ENCODE measurements at regions of chr3 and their contacts with region 1.

Region 1: DNA sequence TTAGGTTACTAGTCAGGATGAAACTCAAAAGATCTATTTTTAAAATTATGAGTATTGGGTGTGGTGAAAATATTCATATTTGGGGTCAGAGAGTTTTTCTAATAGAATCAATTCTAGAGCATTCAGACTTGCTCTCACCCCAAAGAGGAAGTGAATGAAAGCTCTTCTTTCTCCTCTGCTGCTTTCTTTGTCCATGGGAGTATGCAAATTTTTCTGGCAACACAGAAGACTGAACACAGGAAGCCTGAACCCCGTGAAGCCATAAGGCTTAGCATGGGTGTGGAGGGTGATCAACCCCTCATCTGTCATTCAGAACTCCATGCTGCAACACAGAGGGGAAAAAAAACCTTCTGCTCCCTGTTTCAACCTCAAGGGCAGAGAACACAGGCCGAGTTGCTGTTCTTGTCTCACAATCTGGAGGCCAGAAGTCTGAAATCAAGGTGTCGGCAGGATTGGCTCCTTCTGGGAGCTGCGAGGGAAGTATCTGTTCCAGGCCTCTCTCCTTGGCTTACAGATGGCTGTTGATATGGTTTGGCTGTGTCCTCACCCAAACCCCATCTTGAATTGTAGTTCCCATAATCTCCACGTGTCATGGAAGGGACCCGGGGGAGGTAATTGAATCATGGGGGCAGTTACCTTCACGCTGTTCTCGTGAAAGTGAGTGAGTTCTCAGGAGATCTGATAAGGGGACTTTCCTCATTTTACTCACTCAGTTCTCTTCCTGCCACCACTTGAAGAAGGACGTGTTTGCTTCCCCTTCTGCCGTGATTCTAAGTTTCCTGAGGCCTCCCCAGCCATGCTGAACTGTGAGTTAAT is 33.7 kb upstream of the CD47 start:
- DNase-seq: peak; percentile 84
- H3K4me3 Mint-ChIP-seq: peak overlapping the region; percentile 91
- H3K27ac Mint-ChIP-seq: peak overlapping the region; percentile 99
- H3K4me1 Mint-ChIP-seq: peaks cover 55% of the 10 kb centered on the region
- H3K27me3 Mint-ChIP-seq: no peaks in the 10 kb centered on the region

Region 2: GRCh38 chr3:107522510-107523288 is 601.8 kb before region 1 on chr3 and contains the start of gene BBX:
- CTCF ChIA-PET with region 1: no interaction called
- POLR2A ChIA-PET with region 1: no interaction called
- intact Hi-C with region 1: loop called (anchors 2 kb)
- DNase-seq: peak; percentile 96
- H3K4me3 Mint-ChIP-seq: peak within 1 kb of the TSS; percentile 94
- H3K27ac Mint-ChIP-seq: peak within 1 kb of the TSS; percentile 95
- H3K4me1 Mint-ChIP-seq: peaks cover 23% of the 10 kb centered on the region
- H3K27me3 Mint-ChIP-seq: no peaks in the 10 kb centered on the region
- total RNA-seq, gene BBX: 39.9 to 40.9 TPM

Region 3: GRCh38 chr3:107987036-107987947 is 137.3 kb before region 1 on chr3:
- CTCF ChIA-PET with region 1: no interaction called
- POLR2A ChIA-PET with region 1: no interaction called
- intact Hi-C with region 1: loop called (anchors 5 kb)
- DNase-seq: no peak
- H3K4me3 Mint-ChIP-seq: no peak overlapping the region
- H3K27ac Mint-ChIP-seq: no peak overlapping the region
- H3K4me1 Mint-ChIP-seq: peaks cover 32% of the 10 kb centered on the region
- H3K27me3 Mint-ChIP-seq: no peaks in the 10 kb centered on the region

Region 4: DNA sequence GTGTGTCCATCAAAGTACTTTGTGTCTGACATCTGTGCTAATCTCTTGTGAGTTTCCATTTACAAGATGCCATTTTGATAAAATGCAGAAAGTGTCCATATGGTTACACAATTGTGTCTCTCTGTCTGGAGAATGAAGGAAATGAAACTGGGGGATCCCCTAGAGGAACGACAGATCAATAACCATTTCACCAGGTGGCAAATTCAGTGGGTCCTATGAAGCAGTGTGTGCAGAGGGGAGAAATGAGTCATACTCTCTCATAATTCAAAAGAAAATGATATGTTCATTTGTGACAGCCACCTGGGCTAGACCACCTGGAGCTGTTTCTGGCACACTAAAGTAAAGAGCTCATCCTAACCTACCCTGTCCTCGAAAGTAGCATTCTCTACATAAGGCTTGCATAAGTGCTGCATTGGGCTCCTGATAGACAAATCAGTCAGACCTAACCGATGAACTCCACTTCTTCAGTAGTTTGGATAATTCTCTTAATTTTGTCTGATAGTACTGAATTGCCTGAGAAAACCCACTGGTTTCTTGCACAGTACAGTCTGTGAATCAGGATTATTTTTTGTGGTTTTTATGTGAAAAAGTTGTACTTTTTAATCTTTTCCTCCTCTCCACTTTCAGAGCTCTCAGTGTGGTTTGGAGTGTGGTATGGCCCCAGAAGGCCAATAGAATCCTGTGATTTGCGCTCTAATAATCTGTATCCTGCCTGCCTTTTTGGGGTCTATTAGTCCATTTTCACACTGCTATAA is 23.5 kb before region 1 on chr3:
- CTCF ChIA-PET with region 1: interaction called, 4 read pairs
- POLR2A ChIA-PET with region 1: interaction called, 6 read pairs
- intact Hi-C with region 1: loop called (anchors 1 kb)
- DNase-seq: peak; percentile 54
- H3K4me3 Mint-ChIP-seq: peak overlapping the region; percentile 20
- H3K27ac Mint-ChIP-seq: peak overlapping the region; percentile 24
- H3K4me1 Mint-ChIP-seq: peaks cover 33% of the 10 kb centered on the region
- H3K27me3 Mint-ChIP-seq: no peaks in the 10 kb centered on the region

Region 5: GRCh38 chr3:108202837-108203236 is 78.3 kb after region 1 on chr3:
- CTCF ChIA-PET with region 1: no interaction called
- POLR2A ChIA-PET with region 1: no interaction called
- intact Hi-C with region 1: loop called (anchors 1 kb)
- DNase-seq: no peak
- H3K4me3 Mint-ChIP-seq: no peak overlapping the region
- H3K27ac Mint-ChIP-seq: no peak overlapping the region
- H3K4me1 Mint-ChIP-seq: peaks cover 32% of the 10 kb centered on the region
- H3K27me3 Mint-ChIP-seq: no peaks in the 10 kb centered on the region

Region 6: DNA sequence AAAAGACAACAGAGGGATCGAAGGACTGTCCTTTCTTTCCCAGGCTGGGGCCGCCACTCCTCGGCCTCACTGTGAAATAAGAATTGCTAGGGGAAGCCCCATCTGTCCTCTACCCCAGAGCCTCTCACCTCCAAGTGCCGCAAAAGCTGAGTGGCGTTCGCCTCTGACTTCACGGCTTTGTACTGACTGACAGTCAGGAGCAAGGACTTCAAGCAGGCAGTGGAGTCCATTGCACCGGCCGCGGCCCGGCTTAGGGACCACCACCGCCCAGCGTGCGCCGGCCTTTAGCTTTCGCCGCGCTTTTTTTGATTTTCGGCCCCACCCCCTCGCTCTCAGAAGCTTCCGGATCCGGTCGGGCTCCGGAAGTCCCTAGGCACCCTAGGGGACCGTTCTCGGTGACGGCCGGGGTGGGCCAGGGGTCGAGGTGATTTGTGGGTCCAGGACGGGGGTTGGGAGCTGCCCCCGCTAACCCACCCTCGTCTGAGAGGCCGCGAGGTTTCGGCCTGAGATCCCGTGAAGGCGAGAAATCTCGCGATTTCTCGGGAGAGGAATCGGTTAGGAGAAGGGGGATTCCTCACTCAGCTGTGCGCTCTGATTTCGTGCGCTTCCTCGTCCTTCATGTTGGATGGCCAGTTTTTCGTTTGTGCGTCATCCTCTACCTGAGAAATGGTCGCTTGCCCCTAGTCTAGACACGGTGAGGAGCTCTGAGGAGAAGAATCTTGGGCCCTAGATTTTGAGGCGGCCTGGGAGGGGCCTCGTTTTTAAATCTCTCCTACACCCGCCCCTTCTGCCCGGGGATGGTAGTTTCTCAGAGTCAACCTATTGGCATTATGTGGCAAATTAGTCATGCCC is 464.8 kb after region 1 on chr3 and contains the starts of genes CIP2A and DZIP3:
- CTCF ChIA-PET with region 1: no interaction called
- POLR2A ChIA-PET with region 1: no interaction called
- intact Hi-C with region 1: loop called (anchors 2 kb)
- DNase-seq: peak; percentile 90
- H3K4me3 Mint-ChIP-seq: peak within 1 kb of the TSS; percentile 99
- H3K27ac Mint-ChIP-seq: peak within 1 kb of the TSS; percentile 99
- H3K4me1 Mint-ChIP-seq: peaks cover 29% of the 10 kb centered on the region
- H3K27me3 Mint-ChIP-seq: no peaks in the 10 kb centered on the region
- total RNA-seq, gene CIP2A: 39.5 to 45.1 TPM
- total RNA-seq, gene DZIP3: 11.3 to 11.4 TPM